CD8-positive, alpha-beta memory T cell (primary cell): ENCODE measurements at regions of chr15 and their contacts with region 1.

Region 1: DNA sequence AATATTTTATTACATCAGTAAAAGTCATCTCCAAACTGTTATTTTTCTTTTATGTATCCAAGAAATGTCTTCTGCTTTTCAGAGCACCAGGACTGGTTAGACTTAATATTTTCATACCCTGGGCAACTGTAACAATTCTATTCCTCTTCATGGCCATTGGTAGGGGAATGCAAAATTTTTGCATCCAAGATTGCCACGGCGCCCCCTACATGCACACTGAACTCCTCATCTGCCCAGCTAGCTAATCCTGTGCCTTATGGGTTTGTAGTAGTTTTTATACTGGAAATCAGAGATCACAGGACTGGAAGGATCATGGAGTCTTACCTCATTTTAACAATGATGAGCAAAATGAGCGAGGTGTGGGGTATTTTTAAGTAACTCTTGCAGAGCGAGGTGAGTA is 74.2 kb downstream of the CRTC3 start:
- DNase-seq: peak in 3 of 5 donors; percentile 12 to 52 (median 17)
- H3K4me3 ChIP-seq: no peak overlapping the region
- H3K4me3 Mint-ChIP-seq: no peak overlapping the region
- H3K27ac ChIP-seq: no peak overlapping the region
- H3K27ac Mint-ChIP-seq: peak overlapping the region in 1 of 8 donors; percentile 59
- H3K4me1 ChIP-seq: peaks cover 21% of the 10 kb centered on the region
- H3K4me1 Mint-ChIP-seq: peaks cover 16 to 35% (median 18%) of the 10 kb centered on the region in 3 donors
- H3K27me3 ChIP-seq: no peaks in the 10 kb centered on the region
- H3K27me3 Mint-ChIP-seq: no peaks in the 10 kb centered on the region

Region 2: DNA sequence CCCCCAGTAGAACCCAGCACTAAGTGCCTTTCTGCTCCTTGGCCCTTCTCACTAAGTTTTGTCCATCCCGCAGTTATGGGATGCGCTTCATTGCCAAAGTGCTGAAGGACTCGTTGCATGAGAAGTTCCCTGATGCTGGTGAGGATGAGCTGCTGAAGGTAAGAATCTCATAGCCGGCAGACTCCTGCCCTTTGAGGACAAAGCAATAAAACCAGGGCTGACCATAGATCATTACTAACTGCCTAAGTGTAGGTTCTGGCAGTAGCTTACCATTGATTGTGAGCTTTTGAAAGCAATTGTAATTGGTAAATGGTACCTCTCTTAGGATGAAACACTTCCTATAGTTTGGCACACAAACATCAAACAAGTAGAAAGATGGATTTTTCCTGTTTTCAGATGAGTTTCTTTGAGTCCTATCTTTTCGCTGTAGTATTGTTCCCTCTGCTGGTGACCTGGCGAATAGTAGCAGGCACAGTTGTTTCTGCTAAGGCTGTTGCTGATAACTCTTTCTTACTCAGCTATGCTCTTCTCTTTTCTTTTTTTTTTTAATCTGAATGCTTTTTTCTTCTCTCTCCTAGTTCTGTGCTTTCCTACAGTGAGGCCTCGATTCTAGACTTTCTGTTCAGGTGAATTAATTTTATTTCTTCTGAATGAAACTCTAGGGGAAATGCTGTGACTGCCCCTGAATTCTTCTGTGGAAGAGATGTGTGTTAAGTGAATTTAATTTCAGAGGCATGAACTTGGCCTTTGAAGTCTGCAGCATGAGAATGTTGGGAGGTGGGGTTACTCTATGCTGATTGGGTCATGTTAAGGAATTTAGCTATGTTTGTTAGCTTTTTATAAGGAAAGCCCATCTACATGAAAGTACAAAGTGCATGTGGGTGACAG is 121.5 kb before region 1 on chr15:
- CTCF ChIA-PET with region 1: interaction called, 8 read pairs
- POLR2A ChIA-PET with region 1: interaction called, 13 read pairs
- DNase-seq: peak; percentile 6 to 51 (median 18)
- H3K4me3 ChIP-seq: no peak overlapping the region
- H3K4me3 Mint-ChIP-seq: no peak overlapping the region
- H3K27ac ChIP-seq: no peak overlapping the region
- H3K27ac Mint-ChIP-seq: peak overlapping the region in 4 of 8 donors; percentile 6 to 60 (median 44)
- H3K4me1 ChIP-seq: peaks cover 14% of the 10 kb centered on the region
- H3K4me1 Mint-ChIP-seq: peaks cover 31 to 44% (median 40%) of the 10 kb centered on the region in 3 donors
- H3K27me3 ChIP-seq: no peaks in the 10 kb centered on the region
- H3K27me3 Mint-ChIP-seq: peaks cover 0 to 2% of the 10 kb centered on the region in 2 donors

Region 3: DNA sequence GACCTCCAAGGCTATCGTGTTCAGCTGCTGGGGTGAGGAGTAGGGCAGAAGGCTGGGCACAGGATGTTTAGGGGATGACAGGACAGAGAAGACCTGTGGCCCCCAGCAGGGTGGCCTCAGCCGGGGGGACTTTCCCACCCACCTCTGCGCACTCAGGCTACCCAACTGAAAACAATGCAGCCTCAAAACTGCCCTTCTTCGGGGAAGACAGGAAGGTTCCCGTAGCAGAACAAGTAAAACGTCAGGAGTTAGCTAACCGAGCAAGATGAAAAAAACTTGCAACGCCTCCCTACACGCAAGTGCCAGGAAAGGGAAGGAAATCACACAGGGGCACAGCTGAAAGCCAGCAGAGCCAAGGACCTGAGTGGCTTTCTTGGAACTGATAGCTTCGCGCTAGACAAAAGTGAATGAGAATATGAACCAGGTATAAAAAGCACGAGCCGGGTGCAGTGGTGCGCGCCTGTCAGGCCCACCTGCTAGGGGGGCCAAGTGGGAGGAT is 226.1 kb after region 1 on chr15:
- CTCF ChIA-PET with region 1: no interaction called
- POLR2A ChIA-PET with region 1: no interaction called
- DNase-seq: peak in 3 of 5 donors; percentile 22 to 29 (median 29)
- H3K4me3 ChIP-seq: no peak overlapping the region
- H3K4me3 Mint-ChIP-seq: peak overlapping the region; percentile 7 to 80 (median 50)
- H3K27ac ChIP-seq: no peak overlapping the region
- H3K27ac Mint-ChIP-seq: peak overlapping the region; percentile 5 to 94 (median 85)
- H3K4me1 ChIP-seq: no peaks in the 10 kb centered on the region
- H3K4me1 Mint-ChIP-seq: peaks cover 12 to 19% (median 15%) of the 10 kb centered on the region in 3 donors
- H3K27me3 ChIP-seq: no peaks in the 10 kb centered on the region
- H3K27me3 Mint-ChIP-seq: peaks cover 0 to 7% of the 10 kb centered on the region in 2 donors